Psoas muscle (tissue), 8 donors: ENCODE measurements at regions of chr12 and their contacts with region 1.

Region 1: GRCh38 chr12:108618079-108618952 is 15.4 kb downstream of the SELPLG start:
- DNase-seq: peak; percentile 83 to 88
- ATAC-seq: peak; percentile 85 to 97 (median 90)
- H3K4me3 ChIP-seq: no peak overlapping the region
- H3K27ac ChIP-seq: no peak overlapping the region
- H3K4me1 ChIP-seq: peaks cover 4% of the 10 kb centered on the region
- H3K27me3 ChIP-seq: peaks cover 0 to 2% (median 0%) of the 10 kb centered on the region in 3 donors
- CTCF ChIP-seq: peak; percentile 99

Region 2: GRCh38 chr12:108562348-108563135 is 55.8 kb before region 1 on chr12 and contains the start of gene ISCU:
- intact Hi-C with region 1: loop called (anchors 1 to 2 kb)
- DNase-seq: peak; percentile 99
- ATAC-seq: peak; percentile 87 to 90 (median 88)
- H3K4me3 ChIP-seq: peak within 1 kb of the TSS; percentile 76
- H3K27ac ChIP-seq: peak within 1 kb of the TSS; percentile 97
- H3K4me1 ChIP-seq: peaks cover 55% of the 10 kb centered on the region
- H3K27me3 ChIP-seq: no peaks in the 10 kb centered on the region
- CTCF ChIP-seq: no peak
- total RNA-seq, gene ISCU: 148 to 225 (median 212) TPM

Region 3: DNA sequence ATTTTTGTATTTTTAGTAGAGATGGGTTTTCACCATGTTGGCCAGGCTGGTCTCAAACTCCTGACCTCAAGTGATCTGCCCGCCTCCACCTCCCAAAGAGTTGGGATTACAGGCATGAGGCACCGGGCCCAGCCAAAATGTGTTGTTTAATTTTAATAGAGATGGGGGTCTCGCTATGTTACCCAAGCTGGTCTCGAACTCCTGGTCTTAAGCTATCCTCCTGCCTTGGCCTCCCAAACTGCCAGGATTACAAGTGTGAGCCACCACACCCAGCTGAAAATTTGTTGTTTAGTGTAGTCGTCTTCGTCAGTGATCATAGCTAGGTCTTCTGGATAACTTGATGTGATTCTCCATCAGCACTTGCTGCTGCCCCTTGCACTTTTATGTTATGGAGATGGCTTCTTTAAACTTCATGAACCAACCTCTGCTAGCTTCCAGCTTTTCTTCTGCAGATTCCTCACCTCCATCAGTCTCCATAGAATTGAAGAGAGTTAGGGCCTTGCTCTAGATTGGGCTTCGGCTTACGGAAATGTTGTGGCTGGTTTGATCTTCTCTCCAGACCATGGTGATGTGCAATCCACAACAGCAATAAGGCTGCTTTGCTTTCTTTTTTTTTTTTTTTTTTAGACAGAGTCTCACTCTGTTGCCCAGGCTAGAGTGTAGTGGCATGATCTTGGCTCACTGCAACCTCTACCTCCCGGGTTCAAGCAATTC is 43.0 kb before region 1 on chr12:
- intact Hi-C with region 1: loop called in 1 of 2 experiments (anchors 2 kb)
- DNase-seq: no peak
- ATAC-seq: no peak
- H3K4me3 ChIP-seq: no peak overlapping the region
- H3K27ac ChIP-seq: no peak overlapping the region
- H3K4me1 ChIP-seq: no peaks in the 10 kb centered on the region
- H3K27me3 ChIP-seq: no peaks in the 10 kb centered on the region
- CTCF ChIP-seq: no peak